Activated CD8-positive, alpha-beta T cell treated with anti-CD3 and anti-CD28 coated beads, Interleukin-2, amount 10 ng/mL, durations not matched to agents 7 days and 5 days (primary cell): ENCODE measurements at regions of chr1 and their contacts with region 1.

Region 1: GRCh38 chr1:234610348-234611152 is 572 bp upstream of the IRF2BP2 start:
- DNase-seq: peak; percentile 91
- ATAC-seq: peak; percentile 46
- H3K4me3 Mint-ChIP-seq: peak overlapping the region; percentile 87
- H3K27ac Mint-ChIP-seq: peak overlapping the region; percentile 98
- H3K4me1 Mint-ChIP-seq: peaks cover 42% of the 10 kb centered on the region
- H3K27me3 Mint-ChIP-seq: no peaks in the 10 kb centered on the region

Region 2: GRCh38 chr1:234499119-234499942 is 111.2 kb before region 1 on chr1:
- CTCF ChIA-PET with region 1: interaction called, 19 read pairs
- POLR2A ChIA-PET with region 1: interaction called, 6 read pairs
- DNase-seq: peak; percentile 88
- ATAC-seq: peak; percentile 98
- H3K4me3 Mint-ChIP-seq: no peak overlapping the region
- H3K27ac Mint-ChIP-seq: peak overlapping the region; percentile 77
- H3K4me1 Mint-ChIP-seq: peaks cover 41% of the 10 kb centered on the region
- H3K27me3 Mint-ChIP-seq: peaks cover 2% of the 10 kb centered on the region

Region 3: DNA sequence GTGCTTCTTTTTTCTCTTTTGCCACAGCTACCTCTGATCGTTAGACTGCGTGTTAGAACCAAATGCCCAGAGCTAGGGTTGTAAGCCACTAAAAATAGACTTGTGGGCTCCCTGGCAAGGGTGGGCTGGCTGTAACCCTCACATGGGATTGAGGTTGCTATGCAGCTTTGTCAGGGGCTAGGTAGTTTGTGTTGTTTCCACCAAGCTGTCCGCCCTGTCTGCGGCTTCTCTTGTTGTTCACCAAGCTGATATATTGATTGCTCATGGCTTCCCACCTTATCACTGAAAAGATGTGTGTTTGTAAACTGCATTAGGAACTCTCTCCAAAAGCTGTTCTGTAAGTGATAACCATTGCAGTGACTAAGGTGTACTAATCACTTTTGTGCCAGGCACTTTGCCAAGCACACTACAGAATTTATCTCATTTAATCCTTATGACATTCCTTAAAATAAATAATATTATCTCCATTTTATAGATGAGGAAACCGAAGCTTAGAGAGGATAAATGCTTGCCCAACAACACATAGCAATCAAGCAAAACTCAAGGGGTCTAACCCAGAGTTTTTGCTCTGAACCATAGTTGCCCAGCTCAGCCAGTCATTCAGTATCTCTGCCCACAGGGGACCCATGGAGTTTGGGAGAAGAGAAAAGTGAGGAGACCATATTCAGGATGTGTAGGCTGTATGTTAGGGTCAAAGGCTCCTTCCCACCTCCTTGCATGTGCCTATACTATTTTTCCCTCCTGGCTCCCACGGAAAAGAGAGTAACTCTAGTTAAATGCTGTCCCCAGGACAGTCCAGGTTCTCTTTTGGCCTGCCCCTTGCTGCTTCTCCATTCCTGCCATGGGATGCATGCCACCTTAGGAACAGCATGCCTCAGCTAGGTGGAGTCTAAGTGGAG is 89.4 kb before region 1 on chr1:
- CTCF ChIA-PET with region 1: no interaction called
- POLR2A ChIA-PET with region 1: no interaction called
- DNase-seq: no peak
- ATAC-seq: no peak
- H3K4me3 Mint-ChIP-seq: no peak overlapping the region
- H3K27ac Mint-ChIP-seq: peak overlapping the region; percentile 60
- H3K4me1 Mint-ChIP-seq: peaks cover 36% of the 10 kb centered on the region
- H3K27me3 Mint-ChIP-seq: no peaks in the 10 kb centered on the region

Region 4: DNA sequence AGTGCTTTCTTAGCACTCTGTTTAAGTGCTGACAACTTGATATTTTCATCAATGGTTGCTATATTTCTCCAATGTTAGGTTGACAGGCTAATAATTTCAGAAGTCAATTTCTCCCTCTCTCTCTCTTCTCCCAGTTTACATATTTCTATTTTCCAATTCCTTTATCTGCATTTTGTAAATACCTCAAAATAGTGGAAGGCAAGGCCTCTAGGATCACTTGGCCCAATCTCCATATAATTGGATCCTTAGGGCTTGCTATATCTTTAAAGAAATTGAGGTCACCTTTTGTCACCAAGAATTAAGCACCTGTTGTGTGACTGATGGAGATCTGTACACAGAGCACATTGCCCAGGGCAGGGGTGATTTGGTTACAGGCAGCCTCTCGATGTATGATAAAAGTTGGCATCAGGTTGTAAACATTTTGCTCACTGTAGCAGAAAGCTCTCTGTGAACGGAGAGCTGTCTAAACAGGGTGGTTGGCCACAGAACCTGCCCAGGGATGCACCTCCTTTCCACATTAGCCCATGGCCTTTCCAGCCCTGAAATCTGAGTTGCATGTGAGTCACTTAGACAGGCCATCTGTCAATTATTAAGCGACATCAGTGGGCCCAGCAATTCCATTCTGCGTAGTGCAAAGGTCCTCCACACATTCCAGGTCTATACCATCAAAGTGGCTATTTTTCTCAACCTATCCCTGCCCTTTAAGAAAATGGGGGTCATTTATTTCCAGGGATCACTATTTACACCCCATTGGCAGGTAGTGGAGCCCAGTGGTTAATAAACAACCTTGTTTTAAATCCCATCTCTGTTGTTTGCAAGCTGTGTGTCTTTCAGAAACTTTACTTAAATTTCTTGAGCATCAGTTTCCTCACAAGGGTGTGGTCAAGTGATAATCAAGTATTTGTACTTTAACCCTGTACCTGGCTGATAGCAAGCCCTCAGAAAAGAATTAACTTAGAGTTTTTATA is 28.6 kb after region 1 on chr1:
- CTCF ChIA-PET with region 1: no interaction called
- POLR2A ChIA-PET with region 1: no interaction called
- DNase-seq: no peak
- ATAC-seq: no peak
- H3K4me3 Mint-ChIP-seq: no peak overlapping the region
- H3K27ac Mint-ChIP-seq: no peak overlapping the region
- H3K4me1 Mint-ChIP-seq: no peaks in the 10 kb centered on the region
- H3K27me3 Mint-ChIP-seq: peaks cover 10% of the 10 kb centered on the region

Region 5: DNA sequence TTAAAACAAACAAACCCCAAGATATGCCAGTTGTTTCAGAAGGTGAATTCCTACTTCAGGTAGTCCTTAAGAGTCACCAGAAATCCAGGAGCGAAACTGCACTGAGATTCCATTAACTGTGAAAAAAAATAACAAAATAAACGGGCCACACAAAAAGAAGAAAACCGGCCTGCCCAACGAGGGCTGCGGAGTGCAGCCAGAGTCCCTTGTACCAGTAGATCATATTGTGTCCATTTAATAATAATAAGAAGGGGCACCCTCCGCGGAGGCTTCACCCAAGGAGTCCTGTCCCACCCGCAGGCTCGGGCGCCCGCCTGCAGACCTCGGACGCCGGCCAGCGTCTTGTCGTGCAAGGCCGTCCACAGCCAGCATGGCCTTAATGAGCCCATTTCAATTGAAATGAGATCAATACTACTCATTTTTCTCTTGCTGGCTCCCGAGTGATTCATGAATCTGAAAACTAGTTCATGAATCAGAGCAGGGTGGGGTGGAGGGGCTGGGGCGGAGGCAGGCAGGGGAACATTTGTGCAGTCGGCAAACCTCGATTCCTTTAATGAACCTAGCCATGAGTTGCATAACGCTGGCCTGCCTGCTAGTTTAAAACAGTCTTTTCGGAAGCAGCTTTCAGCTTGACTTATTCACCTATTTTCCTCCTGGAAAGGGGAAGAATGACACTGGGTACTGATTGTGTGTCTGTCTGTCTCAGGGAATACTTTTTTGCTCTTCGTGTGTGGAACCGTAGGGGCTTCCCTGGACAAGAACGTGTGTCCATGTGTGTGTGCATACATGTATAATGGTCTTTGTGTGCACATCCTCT is 112.6 kb after region 1 on chr1:
- CTCF ChIA-PET with region 1: interaction called, 75 read pairs
- POLR2A ChIA-PET with region 1: interaction called, 153 read pairs
- DNase-seq: peak; percentile 47
- ATAC-seq: no peak
- H3K4me3 Mint-ChIP-seq: peak overlapping the region; percentile 66
- H3K27ac Mint-ChIP-seq: peak overlapping the region; percentile 93
- H3K4me1 Mint-ChIP-seq: peaks cover 70% of the 10 kb centered on the region
- H3K27me3 Mint-ChIP-seq: no peaks in the 10 kb centered on the region

Region 6: DNA sequence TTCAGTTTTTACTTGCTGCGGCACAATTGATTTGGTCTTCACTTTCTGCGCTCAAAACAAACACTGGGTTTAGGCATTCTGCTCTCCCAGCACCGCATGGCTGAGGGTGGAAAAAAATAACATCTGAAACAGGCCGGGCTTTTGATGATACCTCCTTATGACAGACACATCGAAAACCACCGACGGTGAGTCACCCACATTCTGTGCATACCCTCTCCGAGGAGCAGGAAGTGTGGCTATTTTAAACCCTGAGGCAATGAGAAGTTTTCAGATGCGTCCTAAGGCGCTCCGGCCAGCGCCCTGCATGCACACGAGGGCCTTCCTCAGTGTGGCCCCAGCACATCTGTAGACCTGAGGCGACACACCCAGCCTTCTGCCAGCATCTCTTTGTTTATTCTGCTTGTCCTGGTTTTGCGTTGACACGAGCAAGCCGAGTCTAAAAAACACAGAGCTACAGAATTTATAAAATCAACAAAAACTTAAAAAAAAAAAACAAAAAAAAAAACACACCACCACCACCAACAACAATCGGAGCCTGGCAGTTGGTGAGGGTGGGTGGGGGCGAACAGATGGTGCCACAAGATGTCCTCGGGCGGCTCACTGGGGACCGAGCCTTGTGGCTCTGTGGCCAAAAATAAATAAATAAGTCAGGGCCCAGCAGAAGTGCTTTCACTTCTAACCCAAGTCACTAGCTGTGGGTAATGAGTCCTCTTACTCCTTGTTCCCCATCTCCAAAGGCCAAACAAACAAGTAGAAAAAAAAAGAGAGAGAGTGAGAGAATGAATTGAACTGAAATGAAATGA is 162.0 kb after region 1 on chr1:
- CTCF ChIA-PET with region 1: interaction called, 4 read pairs
- POLR2A ChIA-PET with region 1: interaction called, 29 read pairs
- DNase-seq: peak; percentile 93
- ATAC-seq: peak; percentile 93
- H3K4me3 Mint-ChIP-seq: peak overlapping the region; percentile 50
- H3K27ac Mint-ChIP-seq: peak overlapping the region; percentile 94
- H3K4me1 Mint-ChIP-seq: peaks cover 63% of the 10 kb centered on the region
- H3K27me3 Mint-ChIP-seq: no peaks in the 10 kb centered on the region

Region 7: DNA sequence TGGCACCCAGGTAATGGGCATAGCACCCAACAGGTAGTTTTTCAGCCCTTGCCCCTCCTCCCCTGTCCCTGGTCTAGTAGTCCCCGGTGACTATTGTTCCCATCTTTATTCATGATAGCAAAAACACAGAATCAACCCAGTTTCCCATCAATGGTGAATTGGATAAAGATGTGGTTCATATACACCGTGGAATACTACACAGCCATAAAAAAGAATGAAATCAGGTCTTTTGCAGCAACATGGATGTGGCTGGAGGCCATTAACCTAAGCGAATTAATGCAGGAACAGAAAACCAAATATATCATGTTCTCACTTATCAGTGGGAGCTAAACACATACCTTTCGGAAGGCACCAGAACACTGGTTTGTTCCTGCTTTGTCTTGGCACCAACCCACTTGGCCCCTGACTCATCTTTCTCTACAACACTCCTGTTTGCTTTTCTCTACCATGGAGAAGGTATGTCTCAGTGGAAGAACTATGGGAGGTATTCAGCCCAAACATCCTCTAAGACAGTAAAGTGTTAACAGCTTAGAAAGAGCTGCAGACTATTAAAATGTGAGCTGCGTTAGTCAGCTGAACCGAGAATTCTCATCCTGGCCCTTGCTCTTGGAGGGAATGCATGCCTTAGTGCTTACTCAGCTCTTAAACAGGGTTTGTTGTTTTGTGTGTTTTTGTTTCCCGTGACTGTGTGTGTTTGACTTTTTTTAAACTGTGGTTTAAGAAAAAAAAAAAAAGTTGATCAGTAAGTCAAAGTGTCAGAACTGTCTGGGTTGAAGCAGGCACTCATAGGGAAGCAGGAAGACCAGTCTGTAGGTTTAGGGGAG is 315.1 kb after region 1 on chr1:
- CTCF ChIA-PET with region 1: interaction called, 12 read pairs
- POLR2A ChIA-PET with region 1: interaction called, 34 read pairs
- DNase-seq: no peak
- ATAC-seq: peak; percentile 17
- H3K4me3 Mint-ChIP-seq: peak overlapping the region; percentile 59
- H3K27ac Mint-ChIP-seq: peak overlapping the region; percentile 90
- H3K4me1 Mint-ChIP-seq: peaks cover 61% of the 10 kb centered on the region
- H3K27me3 Mint-ChIP-seq: no peaks in the 10 kb centered on the region

Region 8: GRCh38 chr1:234978397-234979295 is 368.1 kb after region 1 on chr1:
- CTCF ChIA-PET with region 1: interaction called, 13 read pairs
- POLR2A ChIA-PET with region 1: interaction called, 50 read pairs
- DNase-seq: peak; percentile 54
- ATAC-seq: peak; percentile 9
- H3K4me3 Mint-ChIP-seq: peak overlapping the region; percentile 5
- H3K27ac Mint-ChIP-seq: peak overlapping the region; percentile 91
- H3K4me1 Mint-ChIP-seq: peaks cover 72% of the 10 kb centered on the region
- H3K27me3 Mint-ChIP-seq: no peaks in the 10 kb centered on the region

Region 9: DNA sequence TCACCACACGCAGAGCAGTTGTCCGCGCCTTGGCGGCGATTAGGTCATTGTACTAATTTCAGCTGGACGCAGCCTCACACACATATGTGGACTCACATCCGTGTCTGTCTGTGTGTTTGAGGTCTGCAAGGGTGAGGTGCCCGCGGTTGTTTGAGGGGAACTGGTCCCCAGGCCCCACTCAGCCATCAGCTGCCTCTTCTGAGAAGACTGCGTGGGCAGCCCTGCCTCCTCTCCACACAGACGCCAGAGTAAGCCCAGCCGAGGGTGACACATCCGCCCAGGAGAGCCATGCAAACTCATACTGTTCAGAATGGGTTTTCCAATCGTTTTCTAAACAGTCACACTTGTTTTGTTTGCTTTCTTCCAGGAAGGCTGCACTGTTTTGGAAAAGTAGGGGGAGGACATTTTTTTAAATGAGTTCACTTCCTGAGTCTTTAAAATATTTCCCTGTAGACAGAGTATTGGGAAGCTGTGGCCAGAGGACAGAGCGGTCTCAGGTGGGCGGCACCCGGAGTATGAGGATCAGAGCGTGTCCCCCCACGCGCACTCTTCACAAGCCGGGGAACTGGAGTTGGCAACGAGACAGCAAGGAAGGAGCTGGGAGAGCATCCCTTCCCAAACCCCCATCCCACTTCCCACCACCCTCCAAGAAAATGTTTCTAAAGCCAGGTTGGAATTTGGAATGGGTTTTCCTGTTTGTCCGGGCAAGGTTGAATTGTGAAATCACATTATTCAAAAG is 464.8 kb after region 1 on chr1:
- CTCF ChIA-PET with region 1: no interaction called
- POLR2A ChIA-PET with region 1: interaction called, 12 read pairs
- DNase-seq: peak; percentile 43
- ATAC-seq: peak; percentile 67
- H3K4me3 Mint-ChIP-seq: no peak overlapping the region
- H3K27ac Mint-ChIP-seq: peak overlapping the region; percentile 63
- H3K4me1 Mint-ChIP-seq: peaks cover 37% of the 10 kb centered on the region
- H3K27me3 Mint-ChIP-seq: no peaks in the 10 kb centered on the region